Psoas muscle (tissue), 8 donors: ENCODE measurements at regions of chrX and their contacts with region 1.

Region 1: DNA sequence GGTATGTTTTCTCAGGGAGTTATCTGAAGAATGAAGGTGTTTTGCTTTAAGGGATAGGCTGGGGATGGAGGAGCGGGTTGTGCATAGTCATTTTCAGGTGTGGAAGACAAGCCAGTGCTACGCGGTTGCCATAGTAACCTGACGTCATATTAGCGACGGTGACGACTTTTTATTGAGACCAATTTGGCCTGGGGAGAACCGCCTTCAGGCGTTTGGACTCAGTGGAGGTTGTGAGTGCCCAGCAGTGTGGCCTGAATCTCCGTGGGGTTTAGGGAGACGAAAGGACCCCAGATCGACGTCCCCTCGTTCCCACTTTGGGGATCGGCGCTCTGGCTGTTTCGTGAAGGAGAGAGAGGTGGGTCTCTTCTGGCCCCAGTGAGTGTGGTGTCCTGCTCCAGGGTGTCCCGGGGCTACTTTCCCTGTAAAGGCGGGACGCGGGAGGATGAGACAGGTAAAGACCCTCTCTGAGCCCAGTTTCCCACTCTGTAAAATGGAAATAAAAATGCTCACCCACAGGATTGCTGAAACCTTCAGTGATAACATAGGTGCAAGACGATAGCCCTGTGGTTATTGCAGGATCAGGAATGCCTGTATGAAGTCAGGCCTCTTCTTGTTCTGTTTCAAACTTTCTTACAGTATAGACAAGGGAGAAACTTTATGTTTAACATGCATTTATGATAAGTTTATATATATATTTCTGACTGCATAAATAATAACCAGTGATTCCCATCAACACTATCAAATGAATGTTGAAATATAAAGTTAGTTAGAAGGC is 48.6 kb downstream of the GPRASP3 start:
- DNase-seq: peak; percentile 56 to 69
- ATAC-seq: peak; percentile 89 to 96 (median 94)
- H3K4me3 ChIP-seq: peak overlapping the region; percentile 77
- H3K27ac ChIP-seq: peak overlapping the region; percentile 63
- H3K4me1 ChIP-seq: peaks cover 6% of the 10 kb centered on the region
- H3K27me3 ChIP-seq: no peaks in the 10 kb centered on the region
- CTCF ChIP-seq: no peak

Region 2: GRCh38 chrX:102659790-102660757 is 109.1 kb before region 1 on chrX:
- intact Hi-C with region 1: loop called in 1 of 2 experiments (anchors 5 kb)
- DNase-seq: peak; percentile 85 to 92
- ATAC-seq: peak; percentile 95 to 99 (median 98)
- H3K4me3 ChIP-seq: peak overlapping the region; percentile 65
- H3K27ac ChIP-seq: peak overlapping the region; percentile 63
- H3K4me1 ChIP-seq: no peaks in the 10 kb centered on the region
- H3K27me3 ChIP-seq: peaks cover 0 to 4% (median 0%) of the 10 kb centered on the region in 3 donors
- CTCF ChIP-seq: no peak

Region 3: DNA sequence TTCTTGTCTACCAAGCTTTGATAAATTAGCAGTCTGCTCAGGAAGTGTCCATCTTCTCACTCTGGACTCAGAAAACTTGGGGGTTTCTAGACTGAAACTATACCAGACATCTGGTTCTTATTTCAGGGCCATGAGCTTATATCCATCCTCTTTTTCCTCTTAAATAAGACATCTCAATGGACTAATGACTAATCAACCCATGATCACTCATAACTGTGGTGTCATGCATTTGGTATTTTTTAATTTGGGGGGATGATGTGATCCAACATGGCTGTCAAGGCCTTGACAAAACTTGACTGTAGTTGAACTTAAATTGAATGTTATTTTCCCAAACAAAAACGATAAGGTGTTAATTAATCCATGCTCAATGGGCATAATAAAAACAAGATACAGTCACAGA is 39.2 kb after region 1 on chrX:
- intact Hi-C with region 1: loop called in 1 of 2 experiments (anchors 1 kb)
- DNase-seq: no peak
- ATAC-seq: no peak
- H3K4me3 ChIP-seq: no peak overlapping the region
- H3K27ac ChIP-seq: no peak overlapping the region
- H3K4me1 ChIP-seq: no peaks in the 10 kb centered on the region
- H3K27me3 ChIP-seq: peaks cover 0 to 12% (median 0%) of the 10 kb centered on the region in 3 donors
- CTCF ChIP-seq: no peak